ENCODE measurements at regions of chr4 and their contacts with region 1.

Region 1: GRCh38 chr4:145936142-145936996 is 2.3 kb downstream of the ZNF827 start:
- DNase-seq: peak; percentile 87
- ATAC-seq: peak; percentile 60
- H3K4me3 ChIP-seq: peak overlapping the region; percentile 61 to 97 (median 76)
- H3K4me3 Mint-ChIP-seq: peak overlapping the region; percentile 89
- H3K27ac ChIP-seq: peak overlapping the region; percentile 54 to 67
- H3K27ac Mint-ChIP-seq: peak overlapping the region; percentile 97
- H3K4me1 ChIP-seq: peaks cover 15 to 28% of the 10 kb centered on the region in 2 donors
- H3K4me1 Mint-ChIP-seq: peaks cover 43% of the 10 kb centered on the region
- H3K27me3 ChIP-seq: no peaks in the 10 kb centered on the region
- H3K27me3 Mint-ChIP-seq: no peaks in the 10 kb centered on the region
- CTCF ChIP-seq: peak; percentile 50

Region 2: DNA sequence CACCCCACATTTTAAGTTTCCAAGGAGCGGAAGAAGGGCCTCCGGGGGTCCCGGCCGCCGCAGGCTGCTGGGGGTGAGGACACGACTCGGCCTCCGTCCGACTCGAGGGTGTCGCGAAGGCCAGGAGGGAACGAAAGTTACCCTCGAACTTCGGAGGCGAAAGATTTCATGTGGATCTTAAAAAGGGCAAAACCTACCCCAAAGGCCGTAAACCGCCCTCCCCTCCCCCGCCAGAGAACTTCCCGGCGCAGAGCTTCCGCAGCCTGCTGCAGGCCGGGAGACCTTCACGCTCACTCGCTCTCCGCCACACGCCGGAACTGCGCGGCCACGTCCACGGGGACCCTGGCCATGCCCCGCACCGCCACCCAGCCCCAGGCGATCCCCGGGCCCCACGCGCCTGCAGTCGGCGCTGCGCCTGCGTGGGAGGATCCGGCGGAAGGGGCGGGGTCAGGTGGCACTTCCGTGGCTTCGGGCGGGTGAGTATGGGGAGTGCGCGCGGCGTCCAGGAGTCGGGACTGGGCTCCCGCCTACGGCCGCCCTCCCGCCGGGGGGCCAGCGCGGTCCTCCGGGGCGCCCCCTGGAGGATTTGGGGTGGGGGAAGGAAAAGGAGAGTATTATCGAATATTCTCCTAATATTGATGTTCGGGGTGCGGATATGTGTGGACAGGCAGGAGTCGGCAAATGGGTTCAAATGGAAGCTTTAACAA is 317.3 kb before region 1 on chr4 and contains the start of gene MMAA:
- CTCF ChIA-PET with region 1: interaction called, 4 read pairs
- POLR2A ChIA-PET with region 1: interaction called, 7 read pairs
- intact Hi-C with region 1: loop called (anchors 5 kb)
- DNase-seq: peak; percentile 95
- ATAC-seq: peak; percentile 93
- H3K4me3 ChIP-seq: peak within 1 kb of the TSS; percentile 66 to 96 (median 83)
- H3K4me3 Mint-ChIP-seq: peak within 1 kb of the TSS; percentile 90
- H3K27ac ChIP-seq: peak within 1 kb of the TSS; percentile 86 to 94
- H3K27ac Mint-ChIP-seq: peak within 1 kb of the TSS; percentile 95
- H3K4me1 ChIP-seq: peaks cover 10 to 17% of the 10 kb centered on the region in 2 donors
- H3K4me1 Mint-ChIP-seq: peaks cover 28% of the 10 kb centered on the region
- H3K27me3 ChIP-seq: no peaks in the 10 kb centered on the region
- H3K27me3 Mint-ChIP-seq: no peaks in the 10 kb centered on the region
- CTCF ChIP-seq: peak; percentile 63
- total RNA-seq, gene MMAA: 7.8 and 9.0 TPM in 2 replicates

Region 3: DNA sequence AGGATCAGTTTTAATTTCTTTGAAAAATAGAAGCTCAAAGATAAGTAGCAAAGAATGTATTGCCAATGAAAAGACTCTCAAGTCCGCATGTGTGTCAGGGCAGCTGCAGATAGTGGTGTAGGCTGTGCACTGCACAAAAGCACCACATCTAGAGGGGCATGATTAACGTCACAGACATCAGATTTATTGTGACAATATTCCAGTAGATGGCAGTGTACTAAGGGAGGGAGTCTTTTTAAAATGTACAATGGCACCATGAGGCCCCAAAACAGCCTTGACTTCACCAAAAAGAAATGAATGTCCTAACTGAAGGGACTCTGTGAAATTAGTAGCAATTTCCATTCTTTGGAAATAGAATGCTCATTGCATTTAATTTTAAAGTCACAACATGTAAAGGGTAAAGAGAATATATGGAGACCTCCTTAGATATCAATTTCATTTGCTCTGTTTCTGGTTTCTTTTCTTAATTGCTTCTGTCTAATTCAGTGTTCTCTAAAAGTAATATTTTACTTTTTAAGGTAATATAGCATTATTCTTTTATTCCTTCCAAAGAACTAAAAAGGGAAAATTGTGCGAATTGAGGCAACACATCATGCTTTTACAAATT is 96.1 kb before region 1 on chr4:
- CTCF ChIA-PET with region 1: no interaction called
- POLR2A ChIA-PET with region 1: no interaction called
- intact Hi-C with region 1: loop called (anchors 10 kb)
- DNase-seq: peak; percentile 42
- ATAC-seq: peak; percentile 53
- H3K4me3 ChIP-seq: no peak overlapping the region
- H3K4me3 Mint-ChIP-seq: no peak overlapping the region
- H3K27ac ChIP-seq: no peak overlapping the region
- H3K27ac Mint-ChIP-seq: no peak overlapping the region
- H3K4me1 ChIP-seq: peaks cover 7 to 10% of the 10 kb centered on the region in 2 donors
- H3K4me1 Mint-ChIP-seq: peaks cover 19% of the 10 kb centered on the region
- H3K27me3 ChIP-seq: no peaks in the 10 kb centered on the region
- H3K27me3 Mint-ChIP-seq: no peaks in the 10 kb centered on the region
- CTCF ChIP-seq: peak; percentile 53

Region 4: GRCh38 chr4:146029939-146030710 is 93.8 kb after region 1 on chr4:
- CTCF ChIA-PET with region 1: no interaction called
- POLR2A ChIA-PET with region 1: no interaction called
- intact Hi-C with region 1: loop called (anchors 5 kb)
- DNase-seq: peak; percentile 85
- ATAC-seq: peak; percentile 99
- H3K4me3 ChIP-seq: peak overlapping the region in 2 of 5 experiments; percentile 23 to 49
- H3K4me3 Mint-ChIP-seq: peak overlapping the region; percentile 69
- H3K27ac ChIP-seq: peak overlapping the region; percentile 30 to 65
- H3K27ac Mint-ChIP-seq: peak overlapping the region; percentile 72
- H3K4me1 ChIP-seq: peaks cover 43 to 45% of the 10 kb centered on the region in 2 donors
- H3K4me1 Mint-ChIP-seq: peaks cover 52% of the 10 kb centered on the region
- H3K27me3 ChIP-seq: no peaks in the 10 kb centered on the region
- H3K27me3 Mint-ChIP-seq: no peaks in the 10 kb centered on the region
- CTCF ChIP-seq: no peak

Region 5: GRCh38 chr4:146175541-146176453 is 239.4 kb after region 1 on chr4 and contains the start of gene LSM6:
- CTCF ChIA-PET with region 1: no interaction called
- POLR2A ChIA-PET with region 1: interaction called, 8 read pairs
- intact Hi-C with region 1: loop called (anchors 1 kb)
- DNase-seq: peak; percentile 90
- ATAC-seq: peak; percentile 93
- H3K4me3 ChIP-seq: peak within 1 kb of the TSS; percentile 66 to 94 (median 85)
- H3K4me3 Mint-ChIP-seq: peak within 1 kb of the TSS; percentile 85
- H3K27ac ChIP-seq: peak within 1 kb of the TSS; percentile 73 to 87
- H3K27ac Mint-ChIP-seq: peak within 1 kb of the TSS; percentile 95
- H3K4me1 ChIP-seq: peaks cover 17 to 36% of the 10 kb centered on the region in 2 donors
- H3K4me1 Mint-ChIP-seq: peaks cover 48% of the 10 kb centered on the region
- H3K27me3 ChIP-seq: no peaks in the 10 kb centered on the region
- H3K27me3 Mint-ChIP-seq: no peaks in the 10 kb centered on the region
- CTCF ChIP-seq: no peak
- total RNA-seq, gene LSM6: 42.1 and 42.7 TPM in 2 replicates

Region 6: GRCh38 chr4:147056940-147057610 is 1120.7 kb after region 1 on chr4:
- CTCF ChIA-PET with region 1: no interaction called
- POLR2A ChIA-PET with region 1: no interaction called
- intact Hi-C with region 1: loop called (anchors 5 kb)
- DNase-seq: peak; percentile 8
- ATAC-seq: peak; percentile 37
- H3K4me3 ChIP-seq: peak overlapping the region; percentile 21 to 62 (median 49)
- H3K4me3 Mint-ChIP-seq: peak overlapping the region; percentile 90
- H3K27ac ChIP-seq: peak overlapping the region; percentile 41 to 83
- H3K27ac Mint-ChIP-seq: peak overlapping the region; percentile 92
- H3K4me1 ChIP-seq: peaks cover 15 to 21% of the 10 kb centered on the region in 2 donors
- H3K4me1 Mint-ChIP-seq: peaks cover 25% of the 10 kb centered on the region
- H3K27me3 ChIP-seq: peaks cover 0 to 5% (median 0%) of the 10 kb centered on the region in 4 experiments
- H3K27me3 Mint-ChIP-seq: peaks cover 14% of the 10 kb centered on the region
- CTCF ChIP-seq: no peak

Measured in B cell (primary cell).